Activated naive CD4-positive, alpha-beta T cell treated with anti-CD3 and anti-CD28 coated beads for 36 hours (primary cell): ENCODE measurements at regions of chr1 and their contacts with region 1.

Region 1: DNA sequence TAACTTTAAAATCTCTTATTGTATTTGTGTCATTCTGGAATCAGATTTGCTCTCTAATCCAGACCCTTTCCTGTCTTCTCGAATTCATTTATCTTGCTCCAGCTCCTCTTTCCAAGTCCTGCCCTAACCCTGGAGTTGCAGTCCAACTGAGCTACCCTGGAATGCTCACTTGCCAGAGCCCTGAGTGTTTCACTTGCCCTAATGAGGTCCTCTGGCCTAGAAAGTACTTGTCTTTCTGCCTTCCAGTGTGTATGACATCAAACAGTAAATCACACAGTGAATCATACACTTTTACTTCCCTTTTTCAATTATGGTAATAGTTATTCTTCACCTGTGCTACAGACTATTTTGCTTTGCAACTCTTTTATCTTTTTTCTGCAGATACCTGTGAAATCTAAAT is 96.9 kb downstream of the NEK7 start:
- DNase-seq: no peak
- H3K4me3 Mint-ChIP-seq: no peak overlapping the region
- H3K27ac Mint-ChIP-seq: no peak overlapping the region
- H3K4me1 Mint-ChIP-seq: peaks cover 46% of the 10 kb centered on the region
- H3K27me3 Mint-ChIP-seq: no peaks in the 10 kb centered on the region

Region 2: DNA sequence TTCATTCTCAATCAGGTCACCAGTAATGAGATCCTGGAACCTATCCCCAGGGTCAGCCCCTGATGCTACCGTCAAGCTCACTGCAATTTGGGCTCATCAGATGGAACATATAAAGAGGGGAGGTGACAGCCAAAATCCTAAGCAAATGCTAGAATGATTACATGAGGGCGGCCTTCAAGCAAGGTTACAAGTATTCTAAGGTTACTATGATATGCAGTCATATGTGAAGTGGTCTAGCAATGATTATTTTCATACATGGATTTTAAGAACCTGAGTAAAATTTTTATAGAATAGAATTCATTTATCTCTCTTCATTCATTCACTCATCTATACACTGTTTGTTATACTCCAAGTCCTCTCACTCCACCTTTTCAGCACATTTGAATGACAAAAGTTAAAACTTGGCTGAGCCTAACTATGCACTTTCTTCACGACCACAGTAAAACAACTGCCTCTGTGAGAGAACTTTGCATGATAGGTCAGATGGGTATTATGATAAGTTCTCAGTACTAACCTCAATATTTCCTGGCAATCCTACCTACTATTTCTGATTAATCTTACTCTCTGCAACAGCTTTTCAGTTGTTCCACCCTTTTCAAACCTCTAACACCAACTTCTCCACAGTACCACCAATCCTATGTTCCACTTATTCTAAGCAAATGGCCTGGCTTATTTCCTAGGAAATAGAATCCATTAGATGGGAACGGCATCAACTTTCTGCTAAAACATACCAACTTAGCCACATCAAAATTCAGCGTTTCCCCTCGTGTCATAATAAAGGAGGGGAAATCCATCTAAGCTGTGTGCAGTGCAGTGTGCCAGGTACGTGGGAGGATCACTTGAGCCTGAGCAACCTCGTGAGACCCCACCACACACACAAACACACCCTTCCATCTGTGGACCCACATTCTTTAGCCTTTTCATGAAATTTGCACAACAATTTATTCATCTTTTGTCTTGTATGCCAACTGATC is 304.5 kb before region 1 on chr1:
- CTCF ChIA-PET with region 1: no interaction called
- intact Hi-C with region 1: loop called (anchors 5 kb)
- DNase-seq: peak; percentile 45
- H3K4me3 Mint-ChIP-seq: peak overlapping the region; percentile 10
- H3K27ac Mint-ChIP-seq: peak overlapping the region; percentile 69
- H3K4me1 Mint-ChIP-seq: peaks cover 21% of the 10 kb centered on the region
- H3K27me3 Mint-ChIP-seq: no peaks in the 10 kb centered on the region

Region 3: GRCh38 chr1:198030682-198031081 is 223.0 kb before region 1 on chr1:
- CTCF ChIA-PET with region 1: no interaction called
- intact Hi-C with region 1: no loop called
- DNase-seq: no peak
- H3K4me3 Mint-ChIP-seq: no peak overlapping the region
- H3K27ac Mint-ChIP-seq: no peak overlapping the region
- H3K4me1 Mint-ChIP-seq: no peaks in the 10 kb centered on the region
- H3K27me3 Mint-ChIP-seq: peaks cover 3% of the 10 kb centered on the region

Region 4: DNA sequence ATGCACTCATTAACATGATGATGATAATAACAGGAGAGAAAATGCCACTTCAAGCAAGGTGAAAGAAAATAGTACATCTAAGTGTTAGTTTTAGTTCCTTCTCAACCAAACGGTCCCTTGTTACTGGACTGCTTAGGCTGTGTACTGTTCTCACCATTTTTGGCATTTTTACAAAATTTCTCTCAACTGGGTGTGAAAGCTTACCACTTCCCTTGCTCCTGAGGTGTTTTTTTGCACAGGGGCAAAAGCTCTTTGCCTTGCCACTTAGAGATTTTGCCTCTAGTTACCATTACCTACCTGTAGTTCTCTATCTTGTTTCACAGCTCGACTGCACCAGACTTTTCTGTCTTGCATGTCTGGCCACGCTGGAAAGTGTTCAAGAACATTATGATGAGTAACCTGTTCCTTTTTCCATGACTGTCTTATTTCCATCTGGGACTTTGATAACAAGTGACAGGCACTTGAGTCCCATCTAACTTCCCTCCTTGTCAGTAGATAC is 86.2 kb before region 1 on chr1:
- CTCF ChIA-PET with region 1: no interaction called
- intact Hi-C with region 1: loop called (anchors 1 kb)
- DNase-seq: peak; percentile 44
- H3K4me3 Mint-ChIP-seq: peak overlapping the region; percentile 55
- H3K27ac Mint-ChIP-seq: peak overlapping the region; percentile 93
- H3K4me1 Mint-ChIP-seq: peaks cover 90% of the 10 kb centered on the region
- H3K27me3 Mint-ChIP-seq: no peaks in the 10 kb centered on the region

Region 5: DNA sequence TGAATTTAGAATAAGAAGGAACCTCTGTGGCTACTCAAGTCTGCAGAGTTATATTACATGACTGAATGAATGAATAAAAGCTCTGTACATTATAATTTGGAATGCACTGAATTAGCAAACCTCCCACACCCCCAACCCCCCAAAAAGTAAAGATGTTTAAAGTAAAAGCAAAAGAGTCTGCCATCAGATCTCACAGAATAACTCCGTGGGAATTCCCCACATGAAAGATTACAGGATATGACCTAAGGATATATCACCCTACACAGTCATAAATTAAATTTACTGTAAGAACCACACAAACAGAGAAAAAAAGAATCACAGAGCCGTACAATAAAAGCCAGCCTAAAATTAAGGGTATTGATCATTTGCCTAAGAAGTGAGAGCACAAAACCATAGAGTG is 972.5 kb after region 1 on chr1:
- CTCF ChIA-PET with region 1: no interaction called
- intact Hi-C with region 1: loop called (anchors 2 kb)
- DNase-seq: peak; percentile 66
- H3K4me3 Mint-ChIP-seq: peak overlapping the region; percentile 46
- H3K27ac Mint-ChIP-seq: peak overlapping the region; percentile 27
- H3K4me1 Mint-ChIP-seq: peaks cover 23% of the 10 kb centered on the region
- H3K27me3 Mint-ChIP-seq: no peaks in the 10 kb centered on the region